A673 (cell line): ENCODE measurements at regions of chr17 and their contacts with region 1.

Region 1: GRCh38 chr17:12180644-12181261 is 160.1 kb downstream of the MAP2K4 start:
- DNase-seq: peak; percentile 64
- H3K4me3 ChIP-seq: no peak overlapping the region
- H3K27ac ChIP-seq: no peak overlapping the region
- H3K4me1 ChIP-seq: no peaks in the 10 kb centered on the region
- H3K27me3 ChIP-seq: no peaks in the 10 kb centered on the region
- CTCF ChIP-seq: peak; percentile 87

Region 2: GRCh38 chr17:12667299-12667958 is 486.7 kb after region 1 on chr17:
- CTCF ChIA-PET with region 1: interaction called, 3 read pairs
- POLR2A ChIA-PET with region 1: no interaction called
- intact Hi-C with region 1: loop called (anchors 2 kb)
- DNase-seq: peak; percentile 58
- H3K4me3 ChIP-seq: no peak overlapping the region
- H3K27ac ChIP-seq: no peak overlapping the region
- H3K4me1 ChIP-seq: no peaks in the 10 kb centered on the region
- H3K27me3 ChIP-seq: peaks cover 69% of the 10 kb centered on the region
- CTCF ChIP-seq: peak; percentile 54

Region 3: GRCh38 chr17:12744298-12744697 is 563.5 kb after region 1 on chr17:
- CTCF ChIA-PET with region 1: no interaction called
- POLR2A ChIA-PET with region 1: no interaction called
- intact Hi-C with region 1: loop called (anchors 5 kb)
- DNase-seq: no peak
- H3K4me3 ChIP-seq: no peak overlapping the region
- H3K27ac ChIP-seq: no peak overlapping the region
- H3K4me1 ChIP-seq: no peaks in the 10 kb centered on the region
- H3K27me3 ChIP-seq: no peaks in the 10 kb centered on the region
- CTCF ChIP-seq: no peak